ENCODE measurements at regions of chr13 and their contacts with region 1.

Region 1: DNA sequence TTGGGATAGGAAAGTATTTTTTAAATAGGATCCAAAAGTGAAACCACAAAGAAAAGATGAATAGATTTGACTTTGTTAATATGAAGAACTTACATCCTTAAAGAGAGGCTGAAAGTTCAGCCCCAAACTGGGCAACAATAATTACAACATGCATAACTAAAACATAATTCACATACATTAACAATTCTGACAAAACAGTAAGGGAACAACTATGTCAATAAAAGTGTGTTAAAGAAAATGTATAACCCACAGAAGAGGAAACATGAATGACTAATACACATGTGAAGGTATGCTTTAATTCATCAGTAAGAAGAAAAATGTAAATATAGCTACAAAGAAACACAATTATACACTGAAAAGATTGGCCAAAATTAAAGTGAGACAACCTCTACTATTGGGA is 1597.6 kb upstream of the MIR17HG start:
- DNase-seq: no peak
- ATAC-seq: no peak
- H3K4me3 ChIP-seq: no peak overlapping the region
- H3K27ac ChIP-seq: no peak overlapping the region
- H3K4me1 ChIP-seq: no peaks in the 10 kb centered on the region
- H3K27me3 ChIP-seq: no peaks in the 10 kb centered on the region
- CTCF ChIP-seq: no peak

Region 2: DNA sequence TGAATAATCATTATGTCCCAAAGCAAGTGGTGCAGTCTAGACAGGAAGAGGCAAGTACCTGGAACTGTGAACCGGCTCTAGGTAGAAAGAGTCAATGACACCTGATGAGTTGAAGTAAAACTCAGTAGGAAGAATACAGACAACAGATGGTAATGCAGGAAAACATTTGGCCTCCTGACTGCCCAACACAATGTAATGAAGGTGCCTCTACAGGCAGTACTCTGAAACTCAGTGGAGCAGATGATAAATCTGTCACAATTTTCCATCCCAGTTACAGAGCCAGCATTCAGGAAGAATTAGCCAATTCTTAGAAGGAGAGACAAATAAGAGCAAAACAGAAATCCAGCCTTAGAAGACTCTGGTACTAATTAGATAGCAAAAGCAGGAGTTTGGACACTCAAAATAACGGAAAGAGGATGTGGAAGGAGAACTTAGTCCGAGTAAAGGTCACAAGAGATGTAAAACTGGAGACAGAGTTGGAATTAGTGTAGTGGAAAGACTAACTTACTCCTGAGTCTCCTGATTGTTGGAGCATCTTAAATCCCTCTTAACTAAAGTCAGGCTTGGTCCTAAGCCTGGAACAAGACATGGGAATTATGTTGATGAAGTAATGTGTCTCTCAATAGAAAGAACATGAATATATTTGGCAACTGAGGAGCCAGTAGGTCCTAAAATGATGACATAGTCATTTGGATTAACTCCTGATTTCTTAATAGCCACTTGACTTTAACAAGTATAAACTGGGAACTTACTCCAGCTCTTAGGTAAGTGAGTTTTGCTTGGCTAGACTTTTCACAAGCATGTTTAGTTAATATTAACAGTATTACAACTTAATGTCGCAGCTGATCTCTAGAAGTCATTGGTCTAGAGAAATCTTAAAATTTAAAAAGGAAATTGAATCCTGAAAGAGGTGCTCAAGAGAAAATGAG is 1140.3 kb after region 1 on chr13:
- intact Hi-C with region 1: loop called in 1 of 2 experiments (anchors 5 kb)
- DNase-seq: no peak
- ATAC-seq: no peak
- H3K4me3 ChIP-seq: no peak overlapping the region
- H3K27ac ChIP-seq: no peak overlapping the region
- H3K4me1 ChIP-seq: no peaks in the 10 kb centered on the region
- H3K27me3 ChIP-seq: no peaks in the 10 kb centered on the region
- CTCF ChIP-seq: no peak

Region 3: DNA sequence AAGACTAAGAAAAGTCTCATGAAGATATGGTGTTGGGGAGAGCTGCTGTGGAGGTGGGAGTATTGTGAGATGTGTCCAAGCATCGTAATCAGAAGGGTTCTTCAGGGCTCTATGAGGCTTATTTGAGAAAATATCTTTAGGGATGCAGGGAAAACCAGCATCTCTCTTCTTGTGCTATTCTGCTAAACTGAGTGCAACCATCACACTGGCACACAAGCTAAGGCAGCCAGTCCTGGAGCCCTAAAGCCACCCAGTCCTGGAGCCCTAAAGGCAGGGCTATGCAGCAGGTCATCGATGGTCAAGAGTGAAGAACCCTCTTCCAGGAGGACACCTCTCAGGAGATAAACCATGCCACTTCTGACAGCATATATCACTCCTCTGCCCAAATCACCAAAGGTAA is 1152.4 kb after region 1 on chr13:
- intact Hi-C with region 1: no loop called
- DNase-seq: no peak
- ATAC-seq: no peak
- H3K4me3 ChIP-seq: no peak overlapping the region
- H3K27ac ChIP-seq: no peak overlapping the region
- H3K4me1 ChIP-seq: no peaks in the 10 kb centered on the region
- H3K27me3 ChIP-seq: no peaks in the 10 kb centered on the region
- CTCF ChIP-seq: no peak

Measured in psoas muscle (tissue), 8 donors.